ENCODE measurements at regions of chr3 and their contacts with region 1.

Region 1: GRCh38 chr3:66394019-66394752 is 106.6 kb downstream of the LRIG1 start:
- DNase-seq: peak; percentile 74 to 83 (median 81)
- H3K4me3 ChIP-seq: peak overlapping the region; percentile 44 to 49
- H3K4me3 Mint-ChIP-seq: peak overlapping the region; percentile 75 to 94 (median 90)
- H3K27ac ChIP-seq: peak overlapping the region; percentile 45
- H3K27ac Mint-ChIP-seq: peak overlapping the region; percentile 90 to 99 (median 97)
- H3K4me1 ChIP-seq: peaks cover 59% of the 10 kb centered on the region
- H3K4me1 Mint-ChIP-seq: peaks cover 50 to 61% (median 56%) of the 10 kb centered on the region in 4 donors
- H3K27me3 ChIP-seq: no peaks in the 10 kb centered on the region
- H3K27me3 Mint-ChIP-seq: no peaks in the 10 kb centered on the region

Region 2: DNA sequence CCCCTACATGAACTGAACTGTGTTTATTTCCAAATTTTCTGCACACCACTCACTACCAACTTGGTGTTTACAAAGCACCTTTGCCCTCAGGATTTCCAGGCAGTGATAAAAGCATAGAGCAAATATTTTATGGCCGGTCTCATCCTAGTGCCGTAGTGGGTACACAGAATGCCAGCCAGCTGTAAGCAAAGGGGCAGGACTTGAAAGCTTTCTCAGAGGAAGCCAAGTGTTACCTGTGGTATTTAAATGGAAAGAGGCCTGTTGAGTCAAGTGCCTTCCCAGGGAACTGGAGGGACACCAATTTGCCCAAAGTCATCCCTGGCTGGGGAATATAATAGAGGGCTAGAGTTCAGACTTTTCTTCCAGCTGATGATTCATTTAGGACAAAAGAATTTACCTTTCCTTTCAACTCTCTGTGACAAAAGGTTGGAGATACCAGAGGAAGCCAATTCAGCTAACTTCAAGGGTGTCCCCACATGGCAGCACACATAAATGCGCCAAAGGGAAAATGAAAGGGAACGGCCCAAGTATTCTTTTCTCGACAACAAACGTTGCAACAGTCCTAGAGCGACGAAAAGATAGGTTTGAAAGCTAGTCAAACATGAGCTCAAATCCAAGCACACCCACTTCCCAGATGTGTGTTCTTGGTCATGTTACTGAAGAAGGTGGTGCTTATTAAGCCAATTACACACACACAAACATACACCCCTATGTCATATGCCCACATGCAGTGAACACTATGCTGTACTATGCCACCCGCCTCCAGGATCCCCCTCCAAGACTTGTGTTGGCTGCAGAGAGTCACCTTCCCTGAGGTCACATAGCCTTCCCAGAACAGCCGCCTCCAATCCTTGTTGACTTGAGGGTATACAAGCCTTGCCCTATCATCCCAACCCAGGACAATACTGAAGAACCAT is 383.2 kb before region 1 on chr3:
- CTCF ChIA-PET with region 1: no interaction called
- POLR2A ChIA-PET with region 1: no interaction called
- intact Hi-C with region 1: no loop called
- DNase-seq: no peak
- H3K4me3 ChIP-seq: no peak overlapping the region
- H3K4me3 Mint-ChIP-seq: no peak overlapping the region
- H3K27ac ChIP-seq: no peak overlapping the region
- H3K27ac Mint-ChIP-seq: no peak overlapping the region
- H3K4me1 ChIP-seq: no peaks in the 10 kb centered on the region
- H3K4me1 Mint-ChIP-seq: no peaks in the 10 kb centered on the region
- H3K27me3 ChIP-seq: no peaks in the 10 kb centered on the region
- H3K27me3 Mint-ChIP-seq: peaks cover 2 to 4% of the 10 kb centered on the region in 2 donors

Region 3: DNA sequence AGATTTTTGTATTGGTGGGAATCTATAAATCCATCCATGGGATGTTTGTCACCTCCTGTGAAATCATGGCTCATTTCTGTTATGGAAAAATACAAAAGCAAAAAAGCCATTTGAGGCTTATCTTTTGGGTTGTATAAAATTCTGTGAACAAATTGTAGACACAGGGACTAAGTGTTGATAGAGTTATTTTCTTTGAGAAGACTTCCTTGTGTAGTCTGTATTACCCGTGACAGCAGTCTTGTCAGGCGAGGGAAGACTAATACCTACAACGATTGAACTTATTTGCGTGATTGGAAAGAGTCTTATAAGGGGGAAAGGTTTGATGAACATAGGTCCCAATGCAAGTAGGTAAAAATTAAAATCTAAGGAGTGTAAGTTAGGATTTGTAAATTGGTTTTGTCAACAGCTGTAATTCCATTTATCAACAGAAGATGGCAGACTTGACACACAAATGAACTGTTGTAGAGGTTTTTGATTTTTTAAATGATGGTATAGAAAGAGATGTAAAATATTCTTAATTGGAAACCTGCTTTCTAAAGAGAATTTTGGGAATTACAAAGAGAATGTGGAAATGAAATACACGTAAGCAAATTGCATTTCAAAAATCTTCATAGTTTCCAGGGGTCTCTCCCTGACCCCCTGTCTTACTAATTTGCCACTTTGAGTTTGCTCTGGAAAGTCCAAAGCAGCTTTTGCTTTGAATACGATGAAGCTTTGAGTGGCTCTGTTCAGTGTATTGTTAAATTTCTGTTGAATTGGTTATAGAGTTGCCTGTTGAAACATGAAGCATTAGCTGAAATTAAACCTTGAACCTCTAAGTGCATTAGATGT is 140.2 kb before region 1 on chr3:
- CTCF ChIA-PET with region 1: interaction called, 16 read pairs
- POLR2A ChIA-PET with region 1: no interaction called
- intact Hi-C with region 1: no loop called
- DNase-seq: peak in 4 of 5 donors; percentile 30 to 50 (median 41)
- H3K4me3 ChIP-seq: no peak overlapping the region
- H3K4me3 Mint-ChIP-seq: no peak overlapping the region
- H3K27ac ChIP-seq: no peak overlapping the region
- H3K27ac Mint-ChIP-seq: peak overlapping the region in 2 of 7 donors; percentile 24 to 64
- H3K4me1 ChIP-seq: no peaks in the 10 kb centered on the region
- H3K4me1 Mint-ChIP-seq: peaks cover 4 to 11% (median 5%) of the 10 kb centered on the region in 4 donors
- H3K27me3 ChIP-seq: no peaks in the 10 kb centered on the region
- H3K27me3 Mint-ChIP-seq: no peaks in the 10 kb centered on the region

Region 4: GRCh38 chr3:66302288-66302687 is 91.9 kb before region 1 on chr3:
- CTCF ChIA-PET with region 1: interaction called, 6 read pairs
- POLR2A ChIA-PET with region 1: interaction called, 29 read pairs
- intact Hi-C with region 1: loop called (anchors 2 kb)
- DNase-seq: peak; percentile 81 to 88 (median 83)
- H3K4me3 ChIP-seq: no peak overlapping the region
- H3K4me3 Mint-ChIP-seq: peak overlapping the region in 7 of 8 donors; percentile 11 to 79 (median 68)
- H3K27ac ChIP-seq: peak overlapping the region; percentile 73
- H3K27ac Mint-ChIP-seq: peak overlapping the region in 3 of 7 donors; percentile 97 to 99 (median 98)
- H3K4me1 ChIP-seq: peaks cover 93% of the 10 kb centered on the region
- H3K4me1 Mint-ChIP-seq: peaks cover 22 to 71% (median 43%) of the 10 kb centered on the region in 4 donors
- H3K27me3 ChIP-seq: no peaks in the 10 kb centered on the region
- H3K27me3 Mint-ChIP-seq: no peaks in the 10 kb centered on the region

Region 5: GRCh38 chr3:66554178-66554577 is 160.0 kb after region 1 on chr3:
- CTCF ChIA-PET with region 1: no interaction called
- POLR2A ChIA-PET with region 1: no interaction called
- intact Hi-C with region 1: no loop called
- DNase-seq: no peak
- H3K4me3 ChIP-seq: no peak overlapping the region
- H3K4me3 Mint-ChIP-seq: no peak overlapping the region
- H3K27ac ChIP-seq: no peak overlapping the region
- H3K27ac Mint-ChIP-seq: no peak overlapping the region
- H3K4me1 ChIP-seq: no peaks in the 10 kb centered on the region
- H3K4me1 Mint-ChIP-seq: no peaks in the 10 kb centered on the region
- H3K27me3 ChIP-seq: no peaks in the 10 kb centered on the region
- H3K27me3 Mint-ChIP-seq: peaks cover 0 to 8% of the 10 kb centered on the region in 2 donors

Region 6: GRCh38 chr3:66816090-66816761 is 422.0 kb after region 1 on chr3:
- CTCF ChIA-PET with region 1: interaction called, 16 read pairs
- POLR2A ChIA-PET with region 1: interaction called, 3 read pairs
- intact Hi-C with region 1: loop called (anchors 5 kb)
- DNase-seq: peak in 4 of 5 donors; percentile 60 to 69 (median 64)
- H3K4me3 ChIP-seq: no peak overlapping the region
- H3K4me3 Mint-ChIP-seq: no peak overlapping the region
- H3K27ac ChIP-seq: no peak overlapping the region
- H3K27ac Mint-ChIP-seq: no peak overlapping the region
- H3K4me1 ChIP-seq: no peaks in the 10 kb centered on the region
- H3K4me1 Mint-ChIP-seq: peaks cover 0 to 2% (median under 1%) of the 10 kb centered on the region in 4 donors
- H3K27me3 ChIP-seq: no peaks in the 10 kb centered on the region
- H3K27me3 Mint-ChIP-seq: peaks cover 0 to 9% of the 10 kb centered on the region in 2 donors

Region 7: GRCh38 chr3:66998113-66998903 is 604.1 kb after region 1 on chr3 and contains the start of gene KBTBD8:
- CTCF ChIA-PET with region 1: no interaction called
- POLR2A ChIA-PET with region 1: interaction called, 3 read pairs
- intact Hi-C with region 1: loop called (anchors 10 kb)
- DNase-seq: peak; percentile 98 to 99 (median 98)
- H3K4me3 ChIP-seq: peak within 1 kb of the TSS; percentile 57 to 85
- H3K4me3 Mint-ChIP-seq: peak within 1 kb of the TSS; percentile 90 to 96 (median 94)
- H3K27ac ChIP-seq: peak within 1 kb of the TSS; percentile 67
- H3K27ac Mint-ChIP-seq: peak within 1 kb of the TSS; percentile 88 to 97 (median 95)
- H3K4me1 ChIP-seq: peaks cover 39% of the 10 kb centered on the region
- H3K4me1 Mint-ChIP-seq: peaks cover 23 to 48% (median 30%) of the 10 kb centered on the region in 4 donors
- H3K27me3 ChIP-seq: peaks cover 3% of the 10 kb centered on the region
- H3K27me3 Mint-ChIP-seq: peaks cover 0 to 4% of the 10 kb centered on the region in 2 donors
- total RNA-seq, gene KBTBD8: 8.3 to 10.8 TPM